Activated naive CD4-positive, alpha-beta T cell treated with anti-CD3 and anti-CD28 coated beads, Interleukin-2, amount 10 ng/mL, durations not matched to agents 7 days and 5 days (primary cell): ENCODE measurements at regions of chr6 and their contacts with region 1.

Region 1: GRCh38 chr6:135114355-135115145 is 59.9 kb upstream of the HBS1L start:
- DNase-seq: peak; percentile 63
- H3K4me3 Mint-ChIP-seq: no peak overlapping the region
- H3K27ac Mint-ChIP-seq: peak overlapping the region; percentile 82
- H3K4me1 Mint-ChIP-seq: peaks cover 72% of the 10 kb centered on the region
- H3K27me3 Mint-ChIP-seq: no peaks in the 10 kb centered on the region

Region 2: GRCh38 chr6:135088818-135089809 is 25.4 kb before region 1 on chr6:
- CTCF ChIA-PET with region 1: interaction called, 15 read pairs
- DNase-seq: peak; percentile 32
- H3K4me3 Mint-ChIP-seq: peak overlapping the region; percentile 39
- H3K27ac Mint-ChIP-seq: peak overlapping the region; percentile 94
- H3K4me1 Mint-ChIP-seq: peaks cover 80% of the 10 kb centered on the region
- H3K27me3 Mint-ChIP-seq: no peaks in the 10 kb centered on the region

Region 3: DNA sequence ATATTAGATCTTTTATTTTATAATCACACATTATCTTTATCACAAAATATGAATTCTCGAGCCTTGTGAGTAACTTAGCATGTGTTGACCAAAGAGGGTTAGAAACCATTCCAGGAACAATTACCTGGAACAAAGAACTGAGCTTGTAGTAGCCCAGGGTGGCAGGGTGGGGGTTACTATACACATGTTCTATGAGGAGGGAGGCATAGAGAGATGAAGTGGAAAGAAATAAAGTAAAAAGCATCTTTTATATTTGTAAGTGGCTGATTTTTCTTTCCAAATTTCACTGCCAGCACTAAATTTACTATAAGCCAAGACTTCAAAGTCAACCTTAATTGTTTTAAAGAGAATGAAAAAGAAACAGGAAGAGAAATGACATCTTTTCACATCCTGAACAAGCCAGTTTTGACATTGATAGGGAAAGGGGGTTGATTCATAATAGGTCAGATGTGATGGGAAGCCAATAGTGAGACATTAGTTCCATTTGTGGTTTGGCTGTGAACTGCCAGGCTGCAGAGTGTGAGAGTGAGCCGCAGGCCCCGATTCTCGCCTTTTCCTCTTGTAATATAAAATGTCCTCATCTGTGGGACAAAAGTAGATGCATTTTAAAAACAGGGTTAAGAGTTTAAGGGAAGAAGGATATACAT is 13.8 kb after region 1 on chr6:
- CTCF ChIA-PET with region 1: interaction called, 11 read pairs
- DNase-seq: peak; percentile 63
- H3K4me3 Mint-ChIP-seq: peak overlapping the region; percentile 45
- H3K27ac Mint-ChIP-seq: peak overlapping the region; percentile 88
- H3K4me1 Mint-ChIP-seq: peaks cover 39% of the 10 kb centered on the region
- H3K27me3 Mint-ChIP-seq: no peaks in the 10 kb centered on the region

Region 4: DNA sequence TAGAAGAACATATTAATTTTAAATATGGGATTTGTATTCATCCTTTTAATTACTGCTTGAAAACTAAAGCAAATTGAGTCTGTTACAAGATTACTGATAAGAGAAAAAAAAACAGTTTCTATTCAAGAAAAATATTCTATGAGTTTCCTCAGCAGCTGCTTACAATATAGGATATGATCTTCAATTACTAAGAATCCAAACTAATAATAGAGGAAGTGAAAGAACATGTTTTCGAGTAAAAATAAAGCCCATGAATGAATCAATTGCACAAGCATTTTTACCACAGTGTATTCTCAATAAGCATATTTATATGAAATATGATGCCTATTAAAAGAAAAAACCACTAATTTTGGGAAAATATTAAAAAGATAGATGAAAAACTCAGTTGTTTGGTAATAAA is 319.5 kb after region 1 on chr6:
- CTCF ChIA-PET with region 1: no interaction called
- DNase-seq: no peak
- H3K4me3 Mint-ChIP-seq: no peak overlapping the region
- H3K27ac Mint-ChIP-seq: no peak overlapping the region
- H3K4me1 Mint-ChIP-seq: peaks cover 6% of the 10 kb centered on the region
- H3K27me3 Mint-ChIP-seq: no peaks in the 10 kb centered on the region